ENCODE measurements at regions of chr14 and their contacts with region 1.

Region 1: GRCh38 chr14:24271134-24271833 is at the start of gene RABGGTA:
- DNase-seq: peak; percentile 97
- H3K4me3 Mint-ChIP-seq: peak within 1 kb of the TSS; percentile 93
- H3K27ac Mint-ChIP-seq: peak within 1 kb of the TSS; percentile 95
- H3K4me1 Mint-ChIP-seq: peaks cover 42% of the 10 kb centered on the region
- H3K27me3 Mint-ChIP-seq: no peaks in the 10 kb centered on the region
- total RNA-seq, gene RABGGTA: 49.6 and 51.1 TPM in 2 replicates

Region 2: GRCh38 chr14:24232121-24232644 is 39.1 kb before region 1 on chr14 and contains the start of gene NEDD8:
- intact Hi-C with region 1: loop called (anchors 1 kb)
- DNase-seq: peak; percentile 96
- H3K4me3 Mint-ChIP-seq: peak within 1 kb of the TSS; percentile 92
- H3K27ac Mint-ChIP-seq: peak within 1 kb of the TSS; percentile 92
- H3K4me1 Mint-ChIP-seq: peaks cover 41% of the 10 kb centered on the region
- H3K27me3 Mint-ChIP-seq: no peaks in the 10 kb centered on the region
- total RNA-seq, gene NEDD8: 188 and 190 TPM in 2 replicates

Region 3: GRCh38 chr14:24289649-24290249 is 18.5 kb after region 1 on chr14:
- intact Hi-C with region 1: loop called (anchors 1 kb)
- DNase-seq: peak; percentile 79
- H3K4me3 Mint-ChIP-seq: no peak overlapping the region
- H3K27ac Mint-ChIP-seq: no peak overlapping the region
- H3K4me1 Mint-ChIP-seq: peaks cover 22% of the 10 kb centered on the region
- H3K27me3 Mint-ChIP-seq: peaks cover 19% of the 10 kb centered on the region

Region 4: DNA sequence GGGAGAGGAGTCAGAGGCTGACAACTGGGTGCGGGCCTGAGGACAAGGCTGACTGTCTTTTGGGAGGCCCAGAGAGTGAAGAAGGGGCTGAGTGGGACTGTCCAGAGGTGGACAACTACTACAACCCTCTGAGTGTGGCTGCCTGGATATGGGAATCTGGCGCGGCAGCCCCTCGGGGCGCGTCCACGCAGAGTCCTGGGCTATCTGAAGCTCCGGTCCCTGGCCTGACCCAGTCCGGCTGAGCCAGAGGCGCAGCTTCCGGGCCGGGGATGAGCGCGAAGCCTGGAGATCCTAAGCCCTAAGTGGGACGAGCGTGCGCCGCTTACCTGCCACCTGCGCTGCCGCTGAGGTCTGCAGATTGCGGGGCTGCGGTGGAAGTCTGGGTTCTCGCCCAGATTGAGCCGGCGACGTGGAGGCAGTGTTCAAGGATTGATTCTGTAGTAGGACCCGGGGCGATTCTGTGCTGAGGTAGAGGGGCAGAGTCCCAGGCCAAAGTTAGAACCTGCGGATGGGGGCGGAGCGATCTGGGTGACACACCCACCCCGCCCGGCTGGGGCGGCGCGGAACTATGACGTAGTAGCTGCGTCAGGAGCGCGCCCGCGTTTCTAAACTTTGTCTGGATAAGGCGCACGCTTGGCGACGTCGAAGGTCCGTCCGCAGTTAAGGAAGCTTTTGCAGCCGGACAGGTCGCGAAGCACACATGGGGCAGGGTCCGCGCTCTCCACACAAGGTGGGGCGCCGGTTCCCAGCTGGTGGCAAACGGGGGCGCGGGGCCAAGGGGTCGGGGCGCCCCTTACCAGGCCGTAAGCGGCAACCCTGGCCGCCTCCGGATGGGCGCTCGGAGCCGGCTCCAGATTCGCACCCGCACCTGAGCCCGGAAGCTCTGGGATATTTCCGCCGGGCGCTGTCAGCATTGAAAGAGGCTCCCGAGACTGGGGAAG is 28.2 kb after region 1 on chr14 and contains the starts of genes DHRS1 and NOP9:
- intact Hi-C with region 1: loop called (anchors 1 kb)
- DNase-seq: peak; percentile 98
- H3K4me3 Mint-ChIP-seq: peak within 1 kb of the TSS; percentile 86
- H3K27ac Mint-ChIP-seq: peak within 1 kb of the TSS; percentile 91
- H3K4me1 Mint-ChIP-seq: peaks cover 36% of the 10 kb centered on the region
- H3K27me3 Mint-ChIP-seq: no peaks in the 10 kb centered on the region
- total RNA-seq, gene DHRS1: 10.1 and 10.3 TPM in 2 replicates
- total RNA-seq, gene NOP9: 48.3 and 52.2 TPM in 2 replicates

Region 5: GRCh38 chr14:24321212-24321975 is 50.1 kb after region 1 on chr14:
- intact Hi-C with region 1: no loop called
- DNase-seq: no peak
- H3K4me3 Mint-ChIP-seq: no peak overlapping the region
- H3K27ac Mint-ChIP-seq: no peak overlapping the region
- H3K4me1 Mint-ChIP-seq: peaks cover 16% of the 10 kb centered on the region
- H3K27me3 Mint-ChIP-seq: peaks cover 9% of the 10 kb centered on the region

Region 6: GRCh38 chr14:24332268-24332993 is 61.1 kb after region 1 on chr14:
- intact Hi-C with region 1: loop called (anchors 2 kb)
- DNase-seq: peak; percentile 95
- H3K4me3 Mint-ChIP-seq: peak overlapping the region; percentile 87
- H3K27ac Mint-ChIP-seq: peak overlapping the region; percentile 26
- H3K4me1 Mint-ChIP-seq: peaks cover 51% of the 10 kb centered on the region
- H3K27me3 Mint-ChIP-seq: peaks cover 33% of the 10 kb centered on the region